Thyroid gland (tissue), 4 donors: ENCODE measurements at regions of chr6 and their contacts with region 1.

Region 1: DNA sequence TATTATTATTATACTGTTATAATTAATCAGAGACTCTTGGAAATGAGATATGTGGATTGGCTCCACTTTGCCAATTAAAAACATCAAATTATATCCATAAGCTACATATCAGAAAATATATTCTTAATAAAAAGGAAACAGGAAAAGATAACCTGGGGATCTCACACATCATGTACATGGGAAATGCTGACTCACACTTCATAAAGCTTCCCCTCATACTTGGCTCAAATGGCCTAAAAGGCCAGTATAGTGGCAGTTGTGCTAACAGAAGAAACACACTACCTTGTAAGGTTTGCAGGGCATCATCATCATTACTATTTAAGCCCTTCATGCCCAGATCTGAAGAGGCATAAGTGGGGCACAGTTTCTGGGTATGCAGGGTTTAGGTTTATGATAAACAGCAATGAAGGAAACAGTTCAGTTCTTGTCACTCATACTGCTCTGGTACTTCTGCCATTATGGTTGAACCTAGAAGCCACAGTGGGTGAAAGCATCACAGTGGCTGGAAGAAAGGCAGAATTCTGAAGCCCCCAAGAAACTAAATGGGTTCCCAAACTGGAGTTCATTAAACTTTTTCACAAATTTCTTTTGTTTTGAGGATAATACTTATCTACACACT is 60.6 kb downstream of the BTBD9 start:
- DNase-seq: no peak
- H3K4me3 ChIP-seq: no peak overlapping the region
- H3K27ac ChIP-seq: no peak overlapping the region
- H3K4me1 ChIP-seq: peaks cover 3 to 11% of the 10 kb centered on the region in 2 donors
- H3K27me3 ChIP-seq: no peaks in the 10 kb centered on the region
- CTCF ChIP-seq: no peak
- POLR2A ChIP-seq: no peak

Region 2: GRCh38 chr6:38095054-38095453 is 484.1 kb before region 1 on chr6:
- intact Hi-C with region 1: loop called (anchors 5 kb)
- DNase-seq: no peak
- H3K4me3 ChIP-seq: no peak overlapping the region
- H3K27ac ChIP-seq: no peak overlapping the region
- H3K4me1 ChIP-seq: peaks cover 25 to 33% of the 10 kb centered on the region in 2 donors
- H3K27me3 ChIP-seq: no peaks in the 10 kb centered on the region
- CTCF ChIP-seq: no peak
- POLR2A ChIP-seq: no peak